ENCODE measurements at regions of chr10 and their contacts with region 1.

Region 1: DNA sequence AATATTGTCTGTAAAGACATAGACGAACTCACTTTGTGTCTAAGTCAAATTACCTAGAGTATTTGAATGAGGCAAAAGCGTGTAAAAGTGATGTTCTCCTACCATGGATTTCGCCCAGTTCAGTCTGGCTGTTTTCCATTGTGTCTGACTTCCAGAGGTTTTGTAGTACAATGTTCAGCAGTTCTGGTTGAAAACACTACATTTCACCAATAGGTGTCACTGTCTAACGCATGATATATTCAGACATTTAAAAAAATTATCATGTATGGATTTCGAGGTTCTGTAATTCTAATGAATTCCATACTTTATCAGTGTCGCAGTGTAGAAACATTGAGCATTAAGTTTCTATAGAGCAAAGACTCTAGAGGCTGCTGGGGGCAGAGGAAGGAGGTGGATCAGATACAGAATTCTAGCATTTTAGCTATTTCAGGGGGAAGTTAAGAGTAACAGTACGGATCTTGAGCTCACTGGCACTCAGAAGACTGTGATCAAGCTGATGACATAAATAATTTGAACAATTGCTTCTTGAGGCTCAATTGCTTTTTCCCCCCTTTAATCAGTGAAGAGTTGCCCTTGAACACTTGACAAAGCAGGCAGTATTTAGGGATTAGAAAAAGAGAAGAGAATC is 196.9 kb upstream of the RHOBTB1 start:
- DNase-seq: peak in 4 of 9 donors; percentile 9 to 38 (median 13)
- ATAC-seq: peak; percentile 54
- H3K4me3 ChIP-seq: no peak overlapping the region
- H3K4me3 Mint-ChIP-seq: no peak overlapping the region
- H3K27ac ChIP-seq: no peak overlapping the region
- H3K27ac Mint-ChIP-seq: no peak overlapping the region
- H3K4me1 ChIP-seq: no peaks in the 10 kb centered on the region
- H3K4me1 Mint-ChIP-seq: peaks cover 0 to 2% (median 0%) of the 10 kb centered on the region in 7 donors
- H3K27me3 ChIP-seq: no peaks in the 10 kb centered on the region
- H3K27me3 Mint-ChIP-seq: peaks cover 0 to 18% (median 9%) of the 10 kb centered on the region in 5 donors

Region 2: DNA sequence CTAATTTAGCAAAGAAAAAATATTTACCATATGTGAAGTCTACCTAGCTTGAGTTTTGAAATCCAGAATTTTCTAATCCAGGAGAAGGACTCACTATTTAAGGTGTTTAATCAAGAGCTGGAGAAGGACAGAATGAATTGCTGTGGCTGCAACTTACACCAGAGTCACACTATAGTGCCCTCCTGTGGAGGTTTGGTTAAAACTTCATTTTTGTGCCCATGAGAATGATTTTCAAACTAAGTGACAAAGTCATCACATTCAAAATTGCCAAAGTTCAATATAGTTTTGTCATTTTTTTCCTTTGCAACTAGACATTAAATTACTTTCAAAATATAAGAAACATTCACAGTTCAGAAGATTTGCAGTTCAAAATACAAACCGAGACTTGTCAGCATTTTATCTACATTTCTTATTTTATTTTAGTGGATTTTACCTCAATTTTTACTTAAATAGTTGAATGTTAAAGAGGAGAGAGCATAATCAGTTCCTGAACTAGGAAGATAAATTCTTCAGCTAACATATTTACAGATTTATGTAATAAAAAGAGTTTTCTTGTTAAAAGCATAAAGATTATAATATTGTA is 592.6 kb after region 1 on chr10:
- CTCF ChIA-PET with region 1: no interaction called
- POLR2A ChIA-PET with region 1: no interaction called
- intact Hi-C with region 1: loop called in 1 of 2 experiments (anchors 2 kb)
- DNase-seq: peak in 2 of 9 donors; percentile 19 to 24
- ATAC-seq: no peak
- H3K4me3 ChIP-seq: no peak overlapping the region
- H3K4me3 Mint-ChIP-seq: no peak overlapping the region
- H3K27ac ChIP-seq: no peak overlapping the region
- H3K27ac Mint-ChIP-seq: no peak overlapping the region
- H3K4me1 ChIP-seq: no peaks in the 10 kb centered on the region
- H3K4me1 Mint-ChIP-seq: peaks cover 0 to 1% (median 0%) of the 10 kb centered on the region in 7 donors
- H3K27me3 ChIP-seq: no peaks in the 10 kb centered on the region
- H3K27me3 Mint-ChIP-seq: peaks cover 18 to 70% (median 40%) of the 10 kb centered on the region in 5 donors

Measured in naive thymus-derived CD4-positive, alpha-beta T cell (primary cell).